Left ventricle myocardium inferior (tissue), 1 donor: ENCODE measurements at regions of chr22 and their contacts with region 1.

Region 1: GRCh38 chr22:33302049-33302545 is 243.9 kb upstream of the SYN3 start:
- DNase-seq: peak; percentile 84
- H3K4me3 ChIP-seq: peak overlapping the region; percentile 32
- H3K27ac ChIP-seq: peak overlapping the region; percentile 66
- H3K4me1 ChIP-seq: peaks cover 41% of the 10 kb centered on the region
- H3K27me3 ChIP-seq: no peaks in the 10 kb centered on the region
- CTCF ChIP-seq: peak; percentile 97

Region 2: DNA sequence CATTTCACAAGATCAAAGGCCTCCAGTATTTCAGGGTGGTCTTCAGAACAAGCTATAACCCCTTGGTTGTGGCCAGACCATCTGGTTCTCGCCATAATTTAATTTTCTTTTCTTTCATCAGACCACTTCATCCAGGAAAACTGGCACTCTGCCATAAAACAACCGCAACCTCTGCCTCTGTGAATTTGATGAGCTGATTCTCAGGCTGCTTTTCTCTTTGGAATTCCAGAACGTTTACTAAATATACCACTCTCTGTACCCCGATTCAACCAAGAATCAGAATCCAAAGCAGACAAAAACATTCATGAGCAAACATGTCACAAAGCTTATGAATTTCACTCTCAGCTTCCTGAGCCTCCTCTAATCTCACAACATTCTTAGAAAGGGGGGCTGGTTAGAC is 87.8 kb after region 1 on chr22:
- intact Hi-C with region 1: no loop called
- DNase-seq: no peak
- H3K4me3 ChIP-seq: no peak overlapping the region
- H3K27ac ChIP-seq: no peak overlapping the region
- H3K4me1 ChIP-seq: peaks cover 8% of the 10 kb centered on the region
- H3K27me3 ChIP-seq: no peaks in the 10 kb centered on the region
- CTCF ChIP-seq: no peak

Region 3: GRCh38 chr22:33467620-33468095 is 165.6 kb after region 1 on chr22:
- intact Hi-C with region 1: no loop called
- DNase-seq: no peak
- H3K4me3 ChIP-seq: no peak overlapping the region
- H3K27ac ChIP-seq: peak overlapping the region; percentile 20
- H3K4me1 ChIP-seq: peaks cover 49% of the 10 kb centered on the region
- H3K27me3 ChIP-seq: no peaks in the 10 kb centered on the region
- CTCF ChIP-seq: peak; percentile 26

Region 4: DNA sequence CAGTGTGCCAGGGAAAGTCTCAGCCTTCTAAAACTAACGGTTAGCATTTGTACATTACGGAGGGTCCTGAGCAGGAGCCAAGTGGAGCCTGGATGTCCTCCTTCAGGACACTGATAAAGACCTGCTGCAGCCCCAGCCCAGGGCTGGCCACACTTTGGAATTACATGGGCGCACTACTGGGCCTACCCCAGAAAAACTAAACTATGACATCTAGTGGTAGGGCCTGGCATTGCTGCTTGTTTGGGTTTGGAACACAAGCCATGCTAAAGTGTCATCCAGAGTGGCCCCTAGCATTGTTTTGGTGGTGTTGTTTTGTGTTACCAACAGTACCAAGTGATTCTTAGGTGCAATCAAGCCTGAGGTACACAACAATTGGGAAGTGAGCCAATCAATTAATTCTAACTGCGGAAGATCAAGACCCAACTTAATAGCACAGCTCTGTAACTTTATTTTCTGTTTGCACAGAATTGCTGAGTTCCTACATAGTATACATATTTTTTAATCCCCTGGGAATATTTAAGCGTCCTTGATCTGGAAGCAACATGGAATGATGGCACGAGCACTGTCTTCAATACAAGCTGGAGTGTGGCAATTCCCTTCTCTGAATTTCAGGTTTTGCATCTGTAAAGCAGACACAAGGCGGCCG is 277.5 kb after region 1 on chr22:
- intact Hi-C with region 1: loop called (anchors 10 kb)
- DNase-seq: peak; percentile 41
- H3K4me3 ChIP-seq: no peak overlapping the region
- H3K27ac ChIP-seq: no peak overlapping the region
- H3K4me1 ChIP-seq: peaks cover 42% of the 10 kb centered on the region
- H3K27me3 ChIP-seq: no peaks in the 10 kb centered on the region
- CTCF ChIP-seq: peak; percentile 95

Region 5: GRCh38 chr22:34111210-34111824 is 809.2 kb after region 1 on chr22:
- intact Hi-C with region 1: loop called (anchors 5 kb)
- DNase-seq: no peak
- H3K4me3 ChIP-seq: no peak overlapping the region
- H3K27ac ChIP-seq: no peak overlapping the region
- H3K4me1 ChIP-seq: no peaks in the 10 kb centered on the region
- H3K27me3 ChIP-seq: peaks cover 21% of the 10 kb centered on the region
- CTCF ChIP-seq: peak; percentile 80